PC-9 (cell line): ENCODE measurements at regions of chr10 and their contacts with region 1.

Region 1: DNA sequence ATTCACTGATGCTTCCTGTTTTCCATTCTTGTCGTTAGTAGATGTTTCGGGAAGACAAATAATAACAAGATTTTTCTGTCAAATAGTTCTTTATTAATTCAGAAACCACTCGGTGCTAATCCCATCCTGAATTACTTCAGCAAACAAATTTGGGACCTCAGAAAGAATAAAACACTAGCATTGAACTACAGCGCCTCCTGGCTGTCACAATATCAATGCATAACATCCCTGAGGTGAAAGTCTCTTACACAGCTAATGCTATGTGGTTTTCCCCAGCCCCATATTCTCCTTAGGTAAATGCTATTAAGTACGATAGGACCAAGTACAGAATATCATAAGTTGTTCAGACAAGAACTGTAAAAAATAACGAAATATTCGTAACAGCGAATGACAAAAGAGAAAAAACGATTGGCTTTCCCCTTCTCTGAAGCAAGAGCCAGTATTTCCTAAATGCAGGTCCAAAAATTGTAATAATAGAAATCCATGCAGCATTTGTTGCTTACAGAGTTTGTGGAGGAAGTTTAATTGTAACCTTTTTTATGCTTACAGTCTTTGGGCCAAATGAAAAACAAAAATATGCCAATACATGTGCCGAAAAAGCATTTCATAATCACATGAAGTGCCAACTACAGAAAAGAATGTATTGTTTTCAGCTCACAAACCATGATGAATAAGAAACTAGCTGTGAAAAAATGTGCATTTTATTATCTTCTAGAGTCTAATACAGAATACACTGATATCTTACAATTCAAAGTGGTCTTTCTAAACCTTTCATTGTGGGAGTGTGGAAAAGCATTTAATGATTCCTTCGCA is 47.3 kb downstream of the MYPN start:
- DNase-seq: peak; percentile 36 to 40
- H3K4me3 ChIP-seq: no peak overlapping the region
- H3K27ac ChIP-seq: no peak overlapping the region
- H3K4me1 ChIP-seq: peaks cover 62% of the 10 kb centered on the region
- H3K27me3 ChIP-seq: no peaks in the 10 kb centered on the region
- CTCF ChIP-seq: peak; percentile 76

Region 2: DNA sequence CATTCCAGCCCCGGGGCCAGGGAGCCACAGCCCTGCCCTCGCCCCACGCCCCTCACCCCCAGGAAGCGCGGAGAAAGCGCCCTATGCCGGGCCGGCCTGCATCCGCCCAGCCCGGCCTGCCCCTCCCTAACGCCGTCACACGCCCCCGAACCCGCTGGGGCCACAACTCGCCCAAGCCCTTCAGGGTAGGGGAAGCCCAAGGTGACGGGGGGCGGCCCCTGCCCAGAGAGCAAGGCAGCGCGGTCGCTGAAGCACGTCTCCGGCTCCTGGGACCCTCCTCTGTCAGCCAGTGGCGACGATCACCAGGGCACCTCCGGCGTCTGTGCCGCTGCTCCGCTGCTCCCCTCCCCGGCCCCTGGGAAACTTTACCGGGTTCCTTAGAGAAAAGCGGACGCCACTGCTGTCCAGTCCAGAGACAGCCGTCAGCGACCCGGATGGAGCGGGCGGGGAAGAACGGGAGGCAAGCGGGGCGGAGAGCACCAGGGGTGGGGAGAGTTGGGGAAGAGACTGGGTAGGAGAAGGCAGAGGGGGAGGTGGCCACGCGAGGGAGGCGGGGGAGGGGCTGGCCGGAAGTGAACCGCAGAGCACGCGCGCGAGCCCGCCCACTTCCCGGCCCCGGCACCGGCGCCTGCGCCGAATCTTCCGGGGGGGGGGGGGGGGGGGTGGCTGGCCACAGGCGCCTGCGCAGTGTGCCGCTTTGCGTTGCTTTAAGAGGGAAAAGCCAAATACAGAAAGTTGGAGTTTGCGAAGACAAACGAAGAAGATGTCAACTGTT is 81.6 kb before region 1 on chr10 and contains the start of gene HERC4:
- CTCF ChIA-PET with region 1: no interaction called
- POLR2A ChIA-PET with region 1: interaction called, 5 read pairs
- intact Hi-C with region 1: loop called (anchors 1 kb)
- DNase-seq: peak; percentile 82 to 92
- H3K4me3 ChIP-seq: peak within 1 kb of the TSS; percentile 97
- H3K27ac ChIP-seq: peak within 1 kb of the TSS; percentile 95
- H3K4me1 ChIP-seq: peaks cover 36% of the 10 kb centered on the region
- H3K27me3 ChIP-seq: no peaks in the 10 kb centered on the region
- CTCF ChIP-seq: no peak
- total RNA-seq, gene HERC4: 115 and 116 TPM in 2 replicates

Region 3: GRCh38 chr10:68135922-68136718 is 20.5 kb before region 1 on chr10:
- CTCF ChIA-PET with region 1: no interaction called
- POLR2A ChIA-PET with region 1: no interaction called
- intact Hi-C with region 1: loop called (anchors 1 kb)
- DNase-seq: peak; percentile 52 to 91
- H3K4me3 ChIP-seq: peak overlapping the region; percentile 23; the same call in 1 of the 2 replicates
- H3K27ac ChIP-seq: peak overlapping the region; percentile 90
- H3K4me1 ChIP-seq: peaks cover 64% of the 10 kb centered on the region
- H3K27me3 ChIP-seq: no peaks in the 10 kb centered on the region
- CTCF ChIP-seq: no peak